ENCODE measurements at regions of chr9 and their contacts with region 1.

Region 1: GRCh38 chr9:2087500-2088313 is 72.6 kb downstream of the SMARCA2 start:
- DNase-seq: peak; percentile 26
- H3K4me3 Mint-ChIP-seq: no peak overlapping the region
- H3K27ac Mint-ChIP-seq: no peak overlapping the region
- H3K4me1 Mint-ChIP-seq: peaks cover 10% of the 10 kb centered on the region
- H3K27me3 Mint-ChIP-seq: no peaks in the 10 kb centered on the region

Region 2: GRCh38 chr9:1460143-1460769 is 627.5 kb before region 1 on chr9:
- CTCF ChIA-PET with region 1: no interaction called
- intact Hi-C with region 1: loop called (anchors 1 kb)
- DNase-seq: peak; percentile 27
- H3K4me3 Mint-ChIP-seq: no peak overlapping the region
- H3K27ac Mint-ChIP-seq: no peak overlapping the region
- H3K4me1 Mint-ChIP-seq: no peaks in the 10 kb centered on the region
- H3K27me3 Mint-ChIP-seq: peaks cover 9% of the 10 kb centered on the region

Region 3: DNA sequence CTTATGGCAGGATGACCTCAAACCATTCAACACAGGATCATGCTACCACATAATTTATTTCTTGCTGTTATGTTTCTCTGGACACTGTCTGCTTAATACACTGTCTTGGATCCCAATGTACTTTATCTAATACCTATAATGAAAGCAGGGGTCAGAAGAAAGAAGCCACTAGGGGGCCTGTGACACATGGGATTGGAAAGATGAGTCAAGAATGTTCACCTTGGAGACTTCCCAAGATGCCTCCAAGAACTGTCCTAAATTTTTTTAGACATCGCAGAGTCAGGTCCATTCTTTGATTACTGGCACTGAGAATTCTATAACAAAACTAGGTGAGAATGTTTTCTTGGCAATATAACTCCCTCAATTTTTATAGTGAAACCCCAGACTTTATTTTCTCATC is 378.4 kb before region 1 on chr9:
- CTCF ChIA-PET with region 1: interaction called, 3 read pairs
- intact Hi-C with region 1: loop called (anchors 2 kb)
- DNase-seq: peak; percentile 27
- H3K4me3 Mint-ChIP-seq: no peak overlapping the region
- H3K27ac Mint-ChIP-seq: no peak overlapping the region
- H3K4me1 Mint-ChIP-seq: no peaks in the 10 kb centered on the region
- H3K27me3 Mint-ChIP-seq: peaks cover 26% of the 10 kb centered on the region

Region 4: GRCh38 chr9:1910269-1910811 is 177.4 kb before region 1 on chr9:
- CTCF ChIA-PET with region 1: no interaction called
- intact Hi-C with region 1: no loop called
- DNase-seq: no peak
- H3K4me3 Mint-ChIP-seq: no peak overlapping the region
- H3K27ac Mint-ChIP-seq: no peak overlapping the region
- H3K4me1 Mint-ChIP-seq: peaks cover 7% of the 10 kb centered on the region
- H3K27me3 Mint-ChIP-seq: peaks cover 2% of the 10 kb centered on the region

Region 5: GRCh38 chr9:1939926-1940368 is 147.8 kb before region 1 on chr9:
- CTCF ChIA-PET with region 1: interaction called, 8 read pairs
- intact Hi-C with region 1: loop called (anchors 1 kb)
- DNase-seq: peak; percentile 64
- H3K4me3 Mint-ChIP-seq: no peak overlapping the region
- H3K27ac Mint-ChIP-seq: no peak overlapping the region
- H3K4me1 Mint-ChIP-seq: peaks cover 4% of the 10 kb centered on the region
- H3K27me3 Mint-ChIP-seq: peaks cover 8% of the 10 kb centered on the region

Region 6: GRCh38 chr9:2024888-2025782 is 62.6 kb before region 1 on chr9:
- CTCF ChIA-PET with region 1: no interaction called
- intact Hi-C with region 1: no loop called
- DNase-seq: no peak
- H3K4me3 Mint-ChIP-seq: no peak overlapping the region
- H3K27ac Mint-ChIP-seq: no peak overlapping the region
- H3K4me1 Mint-ChIP-seq: peaks cover 88% of the 10 kb centered on the region
- H3K27me3 Mint-ChIP-seq: no peaks in the 10 kb centered on the region

Region 7: DNA sequence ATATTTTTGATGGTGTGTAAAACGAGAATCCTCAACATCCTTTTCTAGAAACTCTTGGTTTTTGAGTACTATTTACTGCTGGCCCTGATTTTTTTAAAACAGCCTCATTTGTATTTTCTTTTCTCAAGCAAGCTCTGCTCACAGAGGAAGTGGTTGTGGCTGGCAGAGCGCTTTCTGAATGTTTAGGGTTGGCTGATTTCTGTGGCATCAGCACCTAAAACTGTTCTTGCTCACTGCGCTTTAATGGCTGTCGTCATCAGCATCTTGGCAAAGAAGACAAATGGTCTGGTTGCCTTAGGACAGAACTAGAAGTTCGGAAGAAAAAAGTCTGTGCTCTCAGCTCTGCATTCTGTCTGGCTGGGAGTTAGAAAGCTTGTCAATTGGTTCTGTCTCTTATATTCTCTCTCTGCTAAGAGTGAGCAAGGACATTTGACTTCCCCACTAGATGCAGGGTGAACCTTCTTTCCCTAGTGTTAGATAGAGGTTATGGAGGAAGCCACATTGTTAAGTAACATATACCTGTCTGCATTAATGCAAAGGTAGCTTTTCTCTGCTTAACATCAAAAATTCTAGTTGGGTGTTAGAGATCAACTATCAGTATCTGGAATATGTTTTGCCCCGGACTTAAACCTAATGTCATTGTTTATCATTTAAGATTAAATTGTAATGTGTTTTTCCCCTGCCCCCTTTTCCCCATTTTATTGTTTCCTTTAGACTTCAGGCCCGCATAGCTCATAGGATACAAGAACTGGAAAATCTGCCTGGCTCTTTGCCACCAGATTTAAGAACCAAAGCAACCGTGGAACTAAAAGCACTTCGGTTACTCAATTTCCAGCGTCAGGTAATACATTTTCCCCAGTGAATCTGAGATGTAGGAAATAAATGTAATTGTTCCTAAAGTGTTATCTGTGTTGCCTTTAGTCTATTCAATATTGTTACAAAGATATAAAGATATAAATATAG is 33.5 kb before region 1 on chr9:
- CTCF ChIA-PET with region 1: interaction called, 13 read pairs
- intact Hi-C with region 1: no loop called
- DNase-seq: peak; percentile 89
- H3K4me3 Mint-ChIP-seq: peak overlapping the region; percentile 5
- H3K27ac Mint-ChIP-seq: peak overlapping the region; percentile 83
- H3K4me1 Mint-ChIP-seq: peaks cover 53% of the 10 kb centered on the region
- H3K27me3 Mint-ChIP-seq: no peaks in the 10 kb centered on the region

Region 8: GRCh38 chr9:2072752-2073405 is 14.8 kb before region 1 on chr9:
- CTCF ChIA-PET with region 1: interaction called, 13 read pairs
- intact Hi-C with region 1: no loop called
- DNase-seq: no peak
- H3K4me3 Mint-ChIP-seq: no peak overlapping the region
- H3K27ac Mint-ChIP-seq: no peak overlapping the region
- H3K4me1 Mint-ChIP-seq: peaks cover 4% of the 10 kb centered on the region
- H3K27me3 Mint-ChIP-seq: no peaks in the 10 kb centered on the region

Measured in activated naive CD4-positive, alpha-beta T cell treated with anti-CD3 and anti-CD28 coated beads for 36 hours (primary cell).